AG04449 (cell line): ENCODE measurements at regions of chr14 and their contacts with region 1.

Region 1: GRCh38 chr14:93939304-93940229 is 12.4 kb downstream of the FAM181A start:
- DNase-seq: no peak
- H3K4me3 ChIP-seq: peak overlapping the region; percentile 50
- CTCF ChIP-seq: peak; percentile 85

Region 2: GRCh38 chr14:93857500-93858283 is 81.9 kb before region 1 on chr14:
- CTCF ChIA-PET with region 1: no interaction called
- POLR2A ChIA-PET with region 1: no interaction called
- DNase-seq: no peak
- H3K4me3 ChIP-seq: no peak overlapping the region
- CTCF ChIP-seq: no peak

Region 3: DNA sequence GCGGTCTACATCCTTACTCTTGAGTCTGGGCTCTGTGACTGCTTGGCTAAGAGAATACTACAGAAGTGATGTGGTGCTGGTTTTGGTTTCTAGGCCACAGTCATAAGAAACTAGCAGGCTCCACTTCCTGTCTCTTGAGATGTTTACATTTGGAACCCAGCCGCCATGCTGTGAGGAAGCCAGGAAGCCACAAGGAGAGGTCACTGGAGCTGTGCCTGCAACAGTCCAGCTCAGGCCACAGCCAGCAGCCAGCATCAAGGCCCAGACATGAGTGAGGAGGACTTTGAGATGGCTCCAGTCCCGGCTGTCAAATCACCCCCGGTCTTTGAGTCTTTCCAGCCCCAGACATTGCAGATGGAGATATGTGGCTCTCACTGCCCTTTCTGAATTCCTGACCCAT is 25.3 kb before region 1 on chr14:
- CTCF ChIA-PET with region 1: interaction called, 13 read pairs
- POLR2A ChIA-PET with region 1: no interaction called
- DNase-seq: no peak
- H3K4me3 ChIP-seq: no peak overlapping the region
- CTCF ChIP-seq: no peak

Region 4: DNA sequence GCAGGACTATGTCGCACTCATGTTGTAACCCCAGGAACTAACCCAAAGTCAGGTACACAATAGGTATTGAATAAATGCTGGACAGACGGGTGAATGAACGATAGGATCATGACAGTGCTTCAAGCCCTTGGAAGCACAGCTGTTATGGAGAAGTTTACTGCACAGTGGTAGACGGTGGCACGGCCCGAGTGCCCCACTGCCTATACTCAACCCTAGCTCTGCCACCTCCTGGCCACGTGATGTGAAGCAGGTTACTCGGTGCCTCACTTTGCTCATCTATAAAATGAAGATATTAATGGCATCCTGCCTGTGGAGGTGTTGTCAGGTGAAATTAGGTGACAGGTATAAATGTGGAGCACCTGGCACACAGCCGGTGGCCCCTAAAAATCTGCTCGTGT is 31.0 kb after region 1 on chr14:
- CTCF ChIA-PET with region 1: interaction called, 135 read pairs
- POLR2A ChIA-PET with region 1: no interaction called
- DNase-seq: no peak
- H3K4me3 ChIP-seq: no peak overlapping the region
- CTCF ChIP-seq: peak; percentile 24

Region 5: GRCh38 chr14:94001501-94002396 is 62.2 kb after region 1 on chr14:
- CTCF ChIA-PET with region 1: interaction called, 472 read pairs
- POLR2A ChIA-PET with region 1: no interaction called
- DNase-seq: no peak
- H3K4me3 ChIP-seq: no peak overlapping the region
- CTCF ChIP-seq: peak; percentile 97

Region 6: GRCh38 chr14:94026173-94026888 is 86.8 kb after region 1 on chr14 and contains the start of gene OTUB2:
- CTCF ChIA-PET with region 1: interaction called, 13 read pairs
- POLR2A ChIA-PET with region 1: interaction called, 3 read pairs
- DNase-seq: peak; percentile 91
- H3K4me3 ChIP-seq: peak within 1 kb of the TSS; percentile 71
- CTCF ChIP-seq: no peak

Region 7: GRCh38 chr14:94129111-94129757 is 189.7 kb after region 1 on chr14 and contains the start of gene IFI27L2:
- CTCF ChIA-PET with region 1: interaction called, 83 read pairs
- POLR2A ChIA-PET with region 1: no interaction called
- DNase-seq: no peak
- H3K4me3 ChIP-seq: peak within 1 kb of the TSS; percentile 73
- CTCF ChIP-seq: peak; percentile 29